Activated CD8-positive, alpha-beta T cell treated with anti-CD3 and anti-CD28 coated beads for 36 hours (primary cell): ENCODE measurements at regions of chr2 and their contacts with region 1.

Region 1: GRCh38 chr2:54704688-54705605 is 18.5 kb upstream of the EML6 start:
- DNase-seq: no peak
- ATAC-seq: peak; percentile 70
- H3K4me3 Mint-ChIP-seq: no peak overlapping the region
- H3K27ac Mint-ChIP-seq: no peak overlapping the region
- H3K4me1 Mint-ChIP-seq: peaks cover 14% of the 10 kb centered on the region
- H3K27me3 Mint-ChIP-seq: peaks cover 16% of the 10 kb centered on the region
- CTCF ChIP-seq: peak; percentile 70

Region 2: GRCh38 chr2:54522624-54523281 is 182.2 kb before region 1 on chr2:
- CTCF ChIA-PET with region 1: interaction called, 148 read pairs
- POLR2A ChIA-PET with region 1: no interaction called
- intact Hi-C with region 1: loop called (anchors 2 kb)
- DNase-seq: peak; percentile 70
- ATAC-seq: peak; percentile 92
- H3K4me3 Mint-ChIP-seq: no peak overlapping the region
- H3K27ac Mint-ChIP-seq: no peak overlapping the region
- H3K4me1 Mint-ChIP-seq: peaks cover 12% of the 10 kb centered on the region
- H3K27me3 Mint-ChIP-seq: no peaks in the 10 kb centered on the region
- CTCF ChIP-seq: peak; percentile 74

Region 3: DNA sequence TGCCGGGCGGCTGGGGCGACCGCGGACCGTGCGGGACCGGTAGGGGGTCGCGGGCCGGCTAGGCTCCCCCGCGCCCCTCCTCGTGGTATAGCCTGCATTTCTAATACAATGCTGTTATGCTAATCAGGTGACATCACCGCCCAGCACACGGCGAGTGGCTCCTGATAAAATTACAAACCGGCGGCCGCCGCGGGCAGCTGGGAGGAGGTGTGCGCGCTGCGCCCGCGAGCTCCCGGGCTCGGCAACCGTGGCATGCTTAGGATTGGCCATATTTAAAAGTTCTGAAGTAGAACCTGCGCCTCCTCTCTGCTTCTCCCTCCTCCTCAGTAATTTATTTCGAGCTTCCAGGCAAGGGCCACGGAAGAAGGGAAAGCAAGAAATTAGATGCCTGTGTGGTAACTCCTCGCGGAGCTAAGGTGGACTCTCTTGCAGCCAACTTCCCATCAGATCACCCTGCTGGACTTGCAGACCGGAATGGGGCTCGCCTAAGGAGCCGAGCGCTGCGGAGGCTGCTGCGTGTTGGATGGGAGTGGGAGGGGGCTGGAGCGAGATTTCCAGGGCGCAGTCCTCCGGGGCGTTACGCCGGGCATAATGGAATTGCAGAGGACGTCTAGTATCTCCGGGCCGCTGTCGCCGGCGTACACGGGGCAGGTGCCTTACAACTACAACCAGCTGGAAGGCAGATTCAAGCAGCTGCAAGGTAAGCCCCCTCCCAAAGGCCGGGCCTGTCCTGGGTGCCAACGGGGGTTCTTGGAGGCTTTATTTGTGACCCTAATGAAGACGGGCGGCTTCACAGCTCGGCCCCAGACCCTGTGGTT is 146.6 kb before region 1 on chr2:
- CTCF ChIA-PET with region 1: interaction called, 16 read pairs
- POLR2A ChIA-PET with region 1: no interaction called
- intact Hi-C with region 1: no loop called
- DNase-seq: peak; percentile 84
- ATAC-seq: peak; percentile 57
- H3K4me3 Mint-ChIP-seq: peak overlapping the region; percentile 86
- H3K27ac Mint-ChIP-seq: peak overlapping the region; percentile 95
- H3K4me1 Mint-ChIP-seq: peaks cover 50% of the 10 kb centered on the region
- H3K27me3 Mint-ChIP-seq: no peaks in the 10 kb centered on the region
- CTCF ChIP-seq: no peak

Region 4: DNA sequence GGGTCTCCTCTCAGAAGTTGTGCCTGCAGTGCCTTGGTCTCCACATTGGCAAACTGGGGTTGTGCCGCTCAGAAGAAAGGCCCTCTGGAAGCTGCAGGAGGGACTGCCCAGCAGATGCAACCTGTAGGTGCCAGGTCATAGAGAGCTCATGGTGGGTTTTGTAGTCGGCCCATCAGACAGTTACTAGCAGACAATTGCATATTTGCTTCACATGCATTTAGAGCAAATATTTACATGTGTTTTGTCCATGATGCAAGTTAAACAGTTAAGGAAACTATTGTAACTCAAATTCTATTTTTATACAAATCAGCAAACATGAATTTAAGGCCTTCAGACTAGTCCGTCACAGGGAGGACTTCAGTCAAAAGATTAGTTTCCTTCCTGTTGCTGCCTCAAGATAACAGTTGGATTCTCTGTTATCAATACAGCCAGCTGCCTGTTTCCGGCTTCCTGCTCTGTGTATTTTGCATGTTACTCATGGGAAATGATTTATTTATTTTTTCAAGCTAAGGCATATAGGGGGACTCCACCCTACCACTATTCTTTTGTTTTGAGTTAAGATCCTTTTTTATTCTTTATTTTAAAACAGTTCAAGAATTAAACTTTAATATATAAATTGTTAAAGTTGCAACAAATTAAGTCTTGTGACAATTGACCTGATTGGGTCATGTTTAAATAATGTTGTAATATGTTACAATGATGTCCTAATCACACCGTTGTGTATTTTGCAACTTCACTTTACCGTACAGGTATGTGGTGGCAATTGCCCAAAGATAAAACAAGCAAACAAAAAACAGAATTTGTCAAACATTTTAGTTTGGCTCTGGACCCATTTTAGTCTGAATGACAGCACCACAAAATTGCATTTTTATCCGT is 115.4 kb before region 1 on chr2:
- CTCF ChIA-PET with region 1: no interaction called
- POLR2A ChIA-PET with region 1: no interaction called
- intact Hi-C with region 1: no loop called
- DNase-seq: peak; percentile 71
- ATAC-seq: peak; percentile 62
- H3K4me3 Mint-ChIP-seq: peak overlapping the region; percentile 56
- H3K27ac Mint-ChIP-seq: peak overlapping the region; percentile 96
- H3K4me1 Mint-ChIP-seq: peaks cover 87% of the 10 kb centered on the region
- H3K27me3 Mint-ChIP-seq: no peaks in the 10 kb centered on the region
- CTCF ChIP-seq: no peak

Region 5: GRCh38 chr2:54657664-54658083 is 47.3 kb before region 1 on chr2:
- CTCF ChIA-PET with region 1: interaction called, 71 read pairs
- POLR2A ChIA-PET with region 1: interaction called, 3 read pairs
- intact Hi-C with region 1: no loop called
- DNase-seq: peak; percentile 62
- ATAC-seq: peak; percentile 64
- H3K4me3 Mint-ChIP-seq: no peak overlapping the region
- H3K27ac Mint-ChIP-seq: peak overlapping the region; percentile 57
- H3K4me1 Mint-ChIP-seq: peaks cover 14% of the 10 kb centered on the region
- H3K27me3 Mint-ChIP-seq: no peaks in the 10 kb centered on the region
- CTCF ChIP-seq: peak; percentile 67

Region 6: GRCh38 chr2:54673501-54673998 is 31.4 kb before region 1 on chr2:
- CTCF ChIA-PET with region 1: interaction called, 218 read pairs
- POLR2A ChIA-PET with region 1: no interaction called
- intact Hi-C with region 1: no loop called
- DNase-seq: peak; percentile 82
- ATAC-seq: peak; percentile 84
- H3K4me3 Mint-ChIP-seq: no peak overlapping the region
- H3K27ac Mint-ChIP-seq: peak overlapping the region; percentile 46
- H3K4me1 Mint-ChIP-seq: peaks cover 14% of the 10 kb centered on the region
- H3K27me3 Mint-ChIP-seq: peaks cover 17% of the 10 kb centered on the region
- CTCF ChIP-seq: no peak

Region 7: GRCh38 chr2:54716375-54716774 is 11.4 kb after region 1 on chr2:
- CTCF ChIA-PET with region 1: interaction called, 17 read pairs
- POLR2A ChIA-PET with region 1: no interaction called
- intact Hi-C with region 1: no loop called
- DNase-seq: no peak
- ATAC-seq: no peak
- H3K4me3 Mint-ChIP-seq: no peak overlapping the region
- H3K27ac Mint-ChIP-seq: no peak overlapping the region
- H3K4me1 Mint-ChIP-seq: no peaks in the 10 kb centered on the region
- H3K27me3 Mint-ChIP-seq: peaks cover 14% of the 10 kb centered on the region
- CTCF ChIP-seq: no peak

Region 8: DNA sequence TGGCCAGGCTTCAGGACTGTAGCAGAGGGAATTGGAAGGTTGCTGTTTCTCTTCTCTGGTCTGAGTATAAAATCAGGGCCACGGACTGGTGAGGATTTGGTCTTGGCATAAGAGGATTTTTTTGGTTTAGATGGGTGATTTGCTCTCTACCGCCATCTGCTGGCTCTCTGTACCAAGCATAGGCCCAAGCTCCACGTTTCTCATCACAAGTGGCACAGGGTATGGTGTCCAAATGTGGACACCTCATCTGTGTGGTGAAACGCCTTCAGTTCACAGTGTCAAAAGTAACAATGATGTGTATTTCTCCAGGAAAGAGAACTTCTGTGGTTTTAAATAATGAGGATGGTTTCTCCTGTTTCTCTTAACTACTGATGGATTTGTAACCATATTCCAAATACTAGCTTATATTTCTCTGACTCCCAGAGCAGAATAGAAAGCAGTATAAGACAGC is 133.7 kb after region 1 on chr2:
- CTCF ChIA-PET with region 1: interaction called, 16 read pairs
- POLR2A ChIA-PET with region 1: no interaction called
- intact Hi-C with region 1: no loop called
- DNase-seq: peak; percentile 77
- ATAC-seq: peak; percentile 92
- H3K4me3 Mint-ChIP-seq: no peak overlapping the region
- H3K27ac Mint-ChIP-seq: no peak overlapping the region
- H3K4me1 Mint-ChIP-seq: no peaks in the 10 kb centered on the region
- H3K27me3 Mint-ChIP-seq: no peaks in the 10 kb centered on the region
- CTCF ChIP-seq: peak; percentile 96